ENCODE measurements at regions of chr14 and their contacts with region 1.

Region 1: GRCh38 chr14:89040460-89041259 is 216.2 kb downstream of the TTC8 start:
- DNase-seq: peak; percentile 68
- H3K4me3 Mint-ChIP-seq: peak overlapping the region; percentile 66
- H3K27ac Mint-ChIP-seq: no peak overlapping the region
- H3K4me1 Mint-ChIP-seq: peaks cover 1% of the 10 kb centered on the region
- H3K27me3 Mint-ChIP-seq: peaks cover 34% of the 10 kb centered on the region

Region 2: GRCh38 chr14:89589400-89590118 is 548.9 kb after region 1 on chr14:
- intact Hi-C with region 1: loop called (anchors 10 kb)
- DNase-seq: no peak
- H3K4me3 Mint-ChIP-seq: no peak overlapping the region
- H3K27ac Mint-ChIP-seq: peak overlapping the region; percentile 36
- H3K4me1 Mint-ChIP-seq: peaks cover 59% of the 10 kb centered on the region
- H3K27me3 Mint-ChIP-seq: no peaks in the 10 kb centered on the region